ENCODE measurements at regions of chr9 and their contacts with region 1.

Region 1: GRCh38 chr9:14203356-14204056 is 110.4 kb downstream of the NFIB start:
- DNase-seq: peak; percentile 88
- H3K4me3 ChIP-seq: peak overlapping the region in 2 of 4 donors; percentile 1 to 7
- H3K27ac ChIP-seq: peak overlapping the region; percentile 64 to 83 (median 76)
- H3K4me1 ChIP-seq: peaks cover 0 to 85% (median 56%) of the 10 kb centered on the region in 4 donors
- H3K27me3 ChIP-seq: no peaks in the 10 kb centered on the region
- CTCF ChIP-seq: no peak
- EP300 ChIP-seq: no peak
- POLR2A ChIP-seq: no peak

Region 2: DNA sequence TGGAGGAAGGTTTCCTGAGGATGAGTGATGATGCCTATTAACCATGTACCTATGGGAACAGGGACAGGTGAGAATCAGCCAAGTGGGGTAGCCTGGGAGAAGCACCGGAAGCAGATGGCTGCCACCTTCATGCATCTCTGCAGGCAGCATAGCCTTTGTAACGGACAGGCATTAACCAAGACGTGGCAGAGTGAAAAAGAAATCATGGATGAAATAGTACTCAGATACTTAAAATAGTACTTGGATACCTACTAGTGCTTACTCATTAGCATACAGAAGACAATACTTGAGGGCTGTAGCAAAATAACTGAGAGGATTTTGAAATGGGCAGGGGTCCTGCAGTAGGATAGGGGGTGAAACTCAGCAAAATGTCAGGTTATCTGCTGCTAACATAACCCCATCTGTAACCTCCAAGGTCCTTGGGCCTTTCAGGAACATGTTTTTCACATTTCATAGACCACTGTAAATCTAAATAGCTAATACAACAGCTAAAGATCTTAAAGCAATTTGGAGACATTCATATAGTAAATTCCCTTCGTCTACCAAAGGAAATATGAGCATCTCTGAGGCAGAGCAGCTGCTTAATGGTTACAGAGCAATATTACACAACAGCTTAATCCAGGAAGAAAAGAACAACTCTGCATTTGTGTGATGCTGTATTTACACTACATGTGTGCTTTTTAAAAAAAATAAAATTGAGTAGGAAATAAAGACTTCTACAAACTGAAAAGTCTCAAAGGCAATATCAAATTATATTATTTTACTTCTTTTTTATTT is 43.9 kb before region 1 on chr9:
- intact Hi-C with region 1: no loop called
- DNase-seq: no peak
- H3K4me3 ChIP-seq: no peak overlapping the region
- H3K27ac ChIP-seq: no peak overlapping the region
- H3K4me1 ChIP-seq: peaks cover 0 to 52% (median 13%) of the 10 kb centered on the region in 4 donors
- H3K27me3 ChIP-seq: no peaks in the 10 kb centered on the region
- CTCF ChIP-seq: no peak
- EP300 ChIP-seq: no peak
- POLR2A ChIP-seq: no peak

Region 3: DNA sequence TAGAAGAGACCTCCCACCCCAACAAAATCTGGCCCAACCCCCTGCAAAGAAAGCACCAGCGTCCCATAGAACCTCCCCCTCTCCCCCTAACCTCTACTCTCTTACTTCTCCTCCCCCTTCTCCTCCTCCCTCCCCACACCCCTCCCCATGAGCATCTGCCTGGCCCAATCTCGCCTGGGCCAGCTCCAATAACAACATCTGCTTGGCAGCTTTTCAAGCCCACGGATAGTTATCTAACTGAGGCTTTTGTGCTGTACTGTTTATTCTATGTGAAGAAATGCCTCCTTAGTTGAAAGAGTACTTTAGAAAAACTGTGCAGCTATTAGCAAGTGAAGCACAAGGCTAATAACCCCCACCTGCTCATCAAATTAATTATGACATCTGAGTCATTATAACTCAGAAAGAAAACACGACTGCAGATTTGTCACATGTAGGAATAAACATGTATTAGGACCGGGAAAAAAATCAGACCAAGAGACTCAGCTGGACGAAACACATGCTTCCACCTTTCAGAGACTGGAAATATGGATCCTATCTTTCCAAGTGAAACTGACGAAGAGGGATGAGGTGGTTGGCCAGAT is 67.7 kb after region 1 on chr9:
- intact Hi-C with region 1: loop called (anchors 5 kb)
- DNase-seq: peak; percentile 85
- H3K4me3 ChIP-seq: peak overlapping the region in 2 of 4 donors; percentile 1 to 14
- H3K27ac ChIP-seq: peak overlapping the region; percentile 20 to 81 (median 67)
- H3K4me1 ChIP-seq: peaks cover 0 to 70% (median 60%) of the 10 kb centered on the region in 4 donors
- H3K27me3 ChIP-seq: no peaks in the 10 kb centered on the region
- CTCF ChIP-seq: no peak
- EP300 ChIP-seq: no peak
- POLR2A ChIP-seq: no peak

Measured in sigmoid colon (tissue), 7 donors.